PC-9 (cell line): ENCODE measurements at regions of chr5 and their contacts with region 1.

Region 1: GRCh38 chr5:65157906-65158603 is 323.7 kb downstream of the ADAMTS6 start:
- DNase-seq: peak; percentile 37 to 61
- H3K4me3 ChIP-seq: no peak overlapping the region
- H3K27ac ChIP-seq: 0 out of 2 replicates have a peak overlapping the region, but pooled peaks have one; percentile 2
- H3K4me1 ChIP-seq: peaks cover 22% of the 10 kb centered on the region
- H3K27me3 ChIP-seq: no peaks in the 10 kb centered on the region
- CTCF ChIP-seq: no peak

Region 2: GRCh38 chr5:65198456-65199120 is 40.5 kb after region 1 on chr5:
- CTCF ChIA-PET with region 1: no interaction called
- POLR2A ChIA-PET with region 1: no interaction called
- intact Hi-C with region 1: loop called (anchors 2 kb)
- DNase-seq: peak; percentile 35 to 69
- H3K4me3 ChIP-seq: no peak overlapping the region
- H3K27ac ChIP-seq: peak overlapping the region; percentile 23
- H3K4me1 ChIP-seq: peaks cover 19% of the 10 kb centered on the region
- H3K27me3 ChIP-seq: no peaks in the 10 kb centered on the region
- CTCF ChIP-seq: no peak

Region 3: DNA sequence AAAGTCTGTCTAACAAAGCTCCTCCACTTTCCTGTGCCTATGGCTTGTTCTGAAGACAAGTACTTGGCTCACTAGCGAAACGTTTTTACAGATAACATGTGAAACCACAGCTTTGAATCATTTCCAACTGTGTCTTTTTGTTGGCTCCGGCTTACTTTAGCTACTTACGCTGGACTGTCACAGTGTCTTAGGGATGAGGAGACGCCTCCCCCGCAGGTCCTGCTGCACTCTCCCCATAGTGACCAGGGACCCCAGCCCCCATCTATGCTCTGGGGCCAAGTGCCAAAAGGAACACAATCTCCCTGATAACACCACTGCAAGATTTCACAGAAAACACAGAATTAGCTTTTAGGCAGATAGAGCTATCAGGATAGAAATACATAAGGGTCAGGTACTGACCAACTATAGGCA is 104.6 kb after region 1 on chr5:
- CTCF ChIA-PET with region 1: no interaction called
- POLR2A ChIA-PET with region 1: no interaction called
- intact Hi-C with region 1: no loop called
- DNase-seq: no peak
- H3K4me3 ChIP-seq: no peak overlapping the region
- H3K27ac ChIP-seq: no peak overlapping the region
- H3K4me1 ChIP-seq: no peaks in the 10 kb centered on the region
- H3K27me3 ChIP-seq: no peaks in the 10 kb centered on the region
- CTCF ChIP-seq: no peak